GM10248 (cell line): ENCODE measurements at regions of chr5 and their contacts with region 1.

Region 1: GRCh38 chr5:89883967-89884366 is 525.6 kb downstream of the CETN3 start:
- DNase-seq: no peak
- CTCF ChIP-seq: no peak

Region 2: DNA sequence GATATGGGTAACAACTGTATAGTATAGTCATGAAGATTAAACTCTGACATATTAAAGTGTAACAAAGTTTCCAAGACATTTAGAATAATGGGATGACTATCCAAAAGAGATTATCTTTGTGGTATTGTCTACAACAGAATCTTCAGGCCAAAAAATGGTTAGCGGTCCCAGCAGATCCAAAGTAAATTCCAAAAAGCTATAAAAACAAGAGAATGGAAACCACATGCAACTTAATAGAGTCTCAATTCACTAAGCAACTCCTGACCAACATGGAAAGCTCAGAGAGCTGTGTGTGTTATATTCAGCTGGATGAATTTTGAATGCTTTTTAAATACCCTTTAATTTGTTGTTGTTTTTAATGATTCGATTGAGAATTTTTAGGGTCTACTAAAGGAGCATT is 162.6 kb before region 1 on chr5:
- CTCF ChIA-PET with region 1: no interaction called
- POLR2A ChIA-PET with region 1: no interaction called
- DNase-seq: no peak
- CTCF ChIP-seq: no peak

Region 3: GRCh38 chr5:89900346-89900745 is 16.4 kb after region 1 on chr5:
- CTCF ChIA-PET with region 1: interaction called, 11 read pairs
- POLR2A ChIA-PET with region 1: no interaction called
- DNase-seq: no peak
- CTCF ChIP-seq: no peak